ENCODE measurements at regions of chr13 and their contacts with region 1.

Region 1: GRCh38 chr13:114132419-114133121 is at the start of gene RASA3:
- DNase-seq: peak; percentile 76
- H3K4me3 ChIP-seq: peak within 1 kb of the TSS; percentile 31 to 86 (median 51)
- H3K27ac ChIP-seq: peak within 1 kb of the TSS; percentile 87
- H3K4me1 ChIP-seq: peaks cover 37% of the 10 kb centered on the region
- H3K27me3 ChIP-seq: no peaks in the 10 kb centered on the region
- CTCF ChIP-seq: no peak
- POLR2A ChIP-seq: peak; percentile 80
- total RNA-seq, gene RASA3: 51.2 and 53.8 TPM in 2 replicates

Region 2: GRCh38 chr13:113951246-113951999 is 181.1 kb before region 1 on chr13:
- CTCF ChIA-PET with region 1: no interaction called
- POLR2A ChIA-PET with region 1: no interaction called
- dilution Hi-C with region 1: no loop called
- intact Hi-C with region 1: loop called (anchors 1 kb)
- DNase-seq: peak; percentile 56
- H3K4me3 ChIP-seq: no peak overlapping the region
- H3K27ac ChIP-seq: no peak overlapping the region
- H3K4me1 ChIP-seq: no peaks in the 10 kb centered on the region
- H3K27me3 ChIP-seq: no peaks in the 10 kb centered on the region
- CTCF ChIP-seq: peak; percentile 79 to 90
- POLR2A ChIP-seq: no peak

Region 3: GRCh38 chr13:113970810-113971470 is 161.6 kb before region 1 on chr13:
- CTCF ChIA-PET with region 1: no interaction called
- POLR2A ChIA-PET with region 1: no interaction called
- dilution Hi-C with region 1: no loop called
- intact Hi-C with region 1: no loop called
- DNase-seq: no peak
- H3K4me3 ChIP-seq: no peak overlapping the region
- H3K27ac ChIP-seq: no peak overlapping the region
- H3K4me1 ChIP-seq: no peaks in the 10 kb centered on the region
- H3K27me3 ChIP-seq: no peaks in the 10 kb centered on the region
- CTCF ChIP-seq: no peak
- POLR2A ChIP-seq: no peak

Region 4: GRCh38 chr13:114019367-114019766 is 113.2 kb before region 1 on chr13:
- CTCF ChIA-PET with region 1: no interaction called
- POLR2A ChIA-PET with region 1: no interaction called
- dilution Hi-C with region 1: no loop called
- intact Hi-C with region 1: no loop called
- DNase-seq: no peak
- H3K4me3 ChIP-seq: no peak overlapping the region
- H3K27ac ChIP-seq: no peak overlapping the region
- H3K4me1 ChIP-seq: no peaks in the 10 kb centered on the region
- H3K27me3 ChIP-seq: no peaks in the 10 kb centered on the region
- CTCF ChIP-seq: no peak
- POLR2A ChIP-seq: no peak

Region 5: DNA sequence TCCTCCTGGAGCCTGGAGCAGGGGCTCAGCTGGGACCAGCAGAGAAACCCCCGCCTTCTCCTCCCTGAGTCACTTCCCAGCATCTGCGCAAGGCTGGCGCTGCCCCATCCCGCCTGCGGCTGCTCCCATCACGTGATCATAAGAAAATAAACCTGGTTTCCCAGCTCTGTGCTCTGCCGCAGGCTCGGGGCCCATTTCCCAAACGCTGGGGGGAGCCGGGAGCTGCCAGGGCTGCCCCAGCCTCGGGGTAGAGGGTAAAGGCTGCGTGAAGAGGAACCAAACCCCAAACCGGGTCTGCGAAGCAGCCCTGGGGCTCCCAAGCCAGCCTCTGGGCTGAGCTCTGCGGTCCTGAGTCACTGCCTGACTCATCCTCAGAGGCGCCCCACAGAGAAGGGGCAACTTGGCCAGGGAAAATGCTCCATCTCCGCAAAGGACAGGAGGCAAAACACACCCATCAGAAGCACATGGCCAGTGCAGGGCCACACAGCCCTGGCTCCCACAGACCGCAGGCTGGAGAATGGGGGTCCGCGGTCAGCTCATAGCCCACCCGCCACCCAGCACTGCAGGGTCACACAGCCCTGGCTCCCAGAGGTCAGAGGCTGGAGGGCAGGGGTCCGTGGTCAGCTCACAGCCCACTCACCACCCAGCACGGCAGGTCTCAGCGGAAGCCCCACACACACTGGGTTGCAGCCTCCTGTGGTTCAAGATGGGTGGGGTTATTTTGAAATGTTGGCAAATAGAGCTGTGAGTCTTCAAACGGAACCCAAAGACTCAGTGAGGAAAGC is 67.2 kb before region 1 on chr13:
- CTCF ChIA-PET with region 1: interaction called, 6 read pairs
- POLR2A ChIA-PET with region 1: no interaction called
- dilution Hi-C with region 1: no loop called
- intact Hi-C with region 1: loop called (anchors 1 kb)
- DNase-seq: peak; percentile 96
- H3K4me3 ChIP-seq: no peak overlapping the region
- H3K27ac ChIP-seq: peak overlapping the region; percentile 95
- H3K4me1 ChIP-seq: peaks cover 51% of the 10 kb centered on the region
- H3K27me3 ChIP-seq: no peaks in the 10 kb centered on the region
- CTCF ChIP-seq: no peak
- POLR2A ChIP-seq: peak; percentile 51

Region 6: GRCh38 chr13:114110091-114110829 is 22.3 kb before region 1 on chr13:
- CTCF ChIA-PET with region 1: interaction called, 3 read pairs
- POLR2A ChIA-PET with region 1: no interaction called
- dilution Hi-C with region 1: no loop called
- intact Hi-C with region 1: loop called (anchors 2 kb)
- DNase-seq: peak; percentile 81
- H3K4me3 ChIP-seq: no peak overlapping the region
- H3K27ac ChIP-seq: peak overlapping the region; percentile 44
- H3K4me1 ChIP-seq: peaks cover 37% of the 10 kb centered on the region
- H3K27me3 ChIP-seq: no peaks in the 10 kb centered on the region
- CTCF ChIP-seq: peak; percentile 38 to 58
- POLR2A ChIP-seq: no peak

Region 7: GRCh38 chr13:114119196-114119595 is 13.4 kb before region 1 on chr13:
- CTCF ChIA-PET with region 1: interaction called, 8 read pairs
- POLR2A ChIA-PET with region 1: interaction called, 10 read pairs
- dilution Hi-C with region 1: no loop called
- intact Hi-C with region 1: loop called (anchors 1 kb)
- DNase-seq: peak; percentile 97
- H3K4me3 ChIP-seq: peak overlapping the region in 1 of 3 experiments; percentile 13
- H3K27ac ChIP-seq: peak overlapping the region; percentile 99
- H3K4me1 ChIP-seq: peaks cover 49% of the 10 kb centered on the region
- H3K27me3 ChIP-seq: no peaks in the 10 kb centered on the region
- CTCF ChIP-seq: no peak
- POLR2A ChIP-seq: peak; percentile 35

Region 8: GRCh38 chr13:114154476-114154875 is 21.9 kb after region 1 on chr13:
- CTCF ChIA-PET with region 1: no interaction called
- POLR2A ChIA-PET with region 1: no interaction called
- dilution Hi-C with region 1: no loop called
- intact Hi-C with region 1: no loop called
- DNase-seq: no peak
- H3K4me3 ChIP-seq: no peak overlapping the region
- H3K27ac ChIP-seq: no peak overlapping the region
- H3K4me1 ChIP-seq: no peaks in the 10 kb centered on the region
- H3K27me3 ChIP-seq: peaks cover 0 to 3% of the 10 kb centered on the region in 2 experiments
- CTCF ChIP-seq: no peak
- POLR2A ChIP-seq: no peak

Measured in endothelial cell of umbilical vein (primary cell).